Caco-2 (cell line): ENCODE measurements at regions of chr1 and their contacts with region 1.

Region 1: GRCh38 chr1:60281360-60281932 is 207.9 kb upstream of the C1orf87 start:
- DNase-seq: peak; percentile 42 to 45
- H3K4me3 ChIP-seq: no peak overlapping the region
- H3K4me3 Mint-ChIP-seq: no peak overlapping the region
- H3K27ac Mint-ChIP-seq: no peak overlapping the region
- H3K4me1 ChIP-seq: no peaks in the 10 kb centered on the region
- H3K4me1 Mint-ChIP-seq: no peaks in the 10 kb centered on the region
- H3K27me3 ChIP-seq: no peaks in the 10 kb centered on the region
- H3K27me3 Mint-ChIP-seq: peaks cover 3% of the 10 kb centered on the region
- CTCF ChIP-seq: peak; percentile 61 to 81

Region 2: GRCh38 chr1:60017508-60018205 is 263.8 kb before region 1 on chr1:
- CTCF ChIA-PET with region 1: no interaction called
- POLR2A ChIA-PET with region 1: no interaction called
- intact Hi-C with region 1: no loop called
- DNase-seq: no peak
- H3K4me3 ChIP-seq: no peak overlapping the region
- H3K4me3 Mint-ChIP-seq: no peak overlapping the region
- H3K27ac Mint-ChIP-seq: no peak overlapping the region
- H3K4me1 ChIP-seq: no peaks in the 10 kb centered on the region
- H3K4me1 Mint-ChIP-seq: no peaks in the 10 kb centered on the region
- H3K27me3 ChIP-seq: no peaks in the 10 kb centered on the region
- H3K27me3 Mint-ChIP-seq: peaks cover 19% of the 10 kb centered on the region
- CTCF ChIP-seq: no peak

Region 3: DNA sequence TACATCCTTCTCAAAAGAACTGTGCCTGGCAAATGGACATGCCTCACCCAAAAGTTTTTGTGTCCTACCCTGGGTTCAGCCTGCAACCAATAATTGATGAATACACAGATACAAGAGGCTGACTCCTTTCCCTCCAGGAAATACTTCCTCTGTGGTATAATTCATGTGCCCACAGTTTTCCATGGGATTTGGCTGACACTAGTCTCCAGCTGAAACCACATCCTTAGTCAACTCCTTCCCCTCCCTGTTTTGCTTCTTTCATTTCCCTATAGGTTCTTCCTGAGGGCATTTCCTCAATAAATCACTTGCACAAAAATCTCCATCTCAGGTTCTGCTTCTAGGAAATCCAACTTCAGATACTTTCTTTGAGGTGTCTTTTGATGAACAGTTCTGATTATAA is 228.7 kb after region 1 on chr1:
- CTCF ChIA-PET with region 1: interaction called, 3 read pairs
- POLR2A ChIA-PET with region 1: no interaction called
- intact Hi-C with region 1: loop called (anchors 10 kb)
- DNase-seq: no peak
- H3K4me3 ChIP-seq: no peak overlapping the region
- H3K4me3 Mint-ChIP-seq: no peak overlapping the region
- H3K27ac Mint-ChIP-seq: no peak overlapping the region
- H3K4me1 ChIP-seq: no peaks in the 10 kb centered on the region
- H3K4me1 Mint-ChIP-seq: no peaks in the 10 kb centered on the region
- H3K27me3 ChIP-seq: no peaks in the 10 kb centered on the region
- H3K27me3 Mint-ChIP-seq: peaks cover 6% of the 10 kb centered on the region
- CTCF ChIP-seq: no peak

Region 4: DNA sequence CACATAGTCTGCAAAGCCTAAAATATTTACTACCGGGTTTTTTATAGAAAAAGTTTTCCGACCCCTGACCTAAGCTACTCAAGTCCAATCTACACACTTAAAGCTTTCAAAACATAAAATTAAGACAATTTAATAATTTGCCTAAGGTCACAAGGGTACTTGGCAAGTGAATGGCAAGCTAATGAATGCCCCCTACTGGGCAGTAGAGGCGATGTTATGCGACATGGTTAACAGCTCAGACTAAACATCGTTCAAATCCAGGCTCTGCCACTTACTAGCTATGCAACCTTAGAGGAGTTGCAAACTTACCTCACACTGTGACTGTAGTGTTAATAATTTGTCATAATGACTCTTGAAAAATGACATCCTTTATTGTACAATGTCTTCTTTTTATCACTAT is 483.8 kb after region 1 on chr1:
- CTCF ChIA-PET with region 1: interaction called, 23 read pairs
- POLR2A ChIA-PET with region 1: no interaction called
- intact Hi-C with region 1: loop called (anchors 1 kb)
- DNase-seq: peak in 1 of 2 experiments; percentile 15
- H3K4me3 ChIP-seq: no peak overlapping the region
- H3K4me3 Mint-ChIP-seq: no peak overlapping the region
- H3K27ac Mint-ChIP-seq: no peak overlapping the region
- H3K4me1 ChIP-seq: no peaks in the 10 kb centered on the region
- H3K4me1 Mint-ChIP-seq: no peaks in the 10 kb centered on the region
- H3K27me3 ChIP-seq: no peaks in the 10 kb centered on the region
- H3K27me3 Mint-ChIP-seq: peaks cover 1% of the 10 kb centered on the region
- CTCF ChIP-seq: peak; percentile 38 to 46